Common myeloid progenitor, CD34-positive (primary cell): ENCODE measurements at regions of chr11 and their contacts with region 1.

Region 1: GRCh38 chr11:69296890-69297786 is 3.2 kb downstream of the MYEOV start:
- DNase-seq: peak; percentile 100
- H3K4me3 ChIP-seq: peak overlapping the region in 5 of 7 experiments; percentile 20 to 63 (median 54)
- H3K27ac ChIP-seq: peak overlapping the region; percentile 84 to 94
- H3K4me1 ChIP-seq: peaks cover 6 to 63% (median 60%) of the 10 kb centered on the region in 4 experiments
- H3K27me3 ChIP-seq: no peaks in the 10 kb centered on the region

Region 2: GRCh38 chr11:68763926-68764639 is 533.1 kb before region 1 on chr11:
- CTCF ChIA-PET with region 1: no interaction called
- POLR2A ChIA-PET with region 1: no interaction called
- DNase-seq: no peak
- H3K4me3 ChIP-seq: no peak overlapping the region
- H3K27ac ChIP-seq: no peak overlapping the region
- H3K4me1 ChIP-seq: no peaks in the 10 kb centered on the region
- H3K27me3 ChIP-seq: no peaks in the 10 kb centered on the region

Region 3: DNA sequence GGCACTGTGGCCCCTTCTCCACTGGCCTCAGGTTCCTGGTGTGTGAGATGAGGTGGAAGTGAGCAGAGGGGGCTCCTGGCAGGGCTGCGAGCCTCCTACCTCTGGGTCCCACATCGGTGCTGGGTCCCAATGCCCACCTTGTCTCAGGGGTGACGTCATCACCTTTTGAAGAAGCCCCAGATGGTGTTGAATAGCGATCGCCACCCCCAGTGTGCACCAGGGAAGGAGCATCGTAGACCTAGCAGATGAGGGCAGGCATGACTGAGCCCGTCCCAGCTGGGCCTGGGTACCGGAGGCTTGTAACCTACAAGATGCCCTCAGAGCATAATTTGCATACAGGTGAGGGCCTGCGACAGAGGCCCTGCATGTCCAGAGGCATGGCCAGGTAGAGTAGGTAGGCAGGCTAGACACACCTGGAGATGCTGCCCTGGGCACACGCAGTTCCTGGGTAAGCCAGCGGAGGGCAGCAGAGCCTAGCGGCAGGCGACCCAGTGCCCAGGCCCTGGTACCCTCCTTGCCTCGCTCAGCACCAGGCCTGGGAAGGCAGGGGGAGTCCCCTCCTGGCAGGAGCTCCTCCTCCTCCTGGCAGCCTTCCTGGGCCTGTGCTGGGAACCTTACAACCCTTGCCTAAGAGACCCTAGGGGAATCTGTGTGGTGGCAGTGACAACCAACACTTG is 195.9 kb before region 1 on chr11:
- CTCF ChIA-PET with region 1: interaction called, 12 read pairs
- POLR2A ChIA-PET with region 1: no interaction called
- DNase-seq: peak; percentile 54 to 70 (median 60)
- H3K4me3 ChIP-seq: no peak overlapping the region
- H3K27ac ChIP-seq: no peak overlapping the region
- H3K4me1 ChIP-seq: peaks cover 0 to 8% (median 3%) of the 10 kb centered on the region in 4 experiments
- H3K27me3 ChIP-seq: peaks cover 0 to 26% (median 2%) of the 10 kb centered on the region in 5 experiments

Region 4: DNA sequence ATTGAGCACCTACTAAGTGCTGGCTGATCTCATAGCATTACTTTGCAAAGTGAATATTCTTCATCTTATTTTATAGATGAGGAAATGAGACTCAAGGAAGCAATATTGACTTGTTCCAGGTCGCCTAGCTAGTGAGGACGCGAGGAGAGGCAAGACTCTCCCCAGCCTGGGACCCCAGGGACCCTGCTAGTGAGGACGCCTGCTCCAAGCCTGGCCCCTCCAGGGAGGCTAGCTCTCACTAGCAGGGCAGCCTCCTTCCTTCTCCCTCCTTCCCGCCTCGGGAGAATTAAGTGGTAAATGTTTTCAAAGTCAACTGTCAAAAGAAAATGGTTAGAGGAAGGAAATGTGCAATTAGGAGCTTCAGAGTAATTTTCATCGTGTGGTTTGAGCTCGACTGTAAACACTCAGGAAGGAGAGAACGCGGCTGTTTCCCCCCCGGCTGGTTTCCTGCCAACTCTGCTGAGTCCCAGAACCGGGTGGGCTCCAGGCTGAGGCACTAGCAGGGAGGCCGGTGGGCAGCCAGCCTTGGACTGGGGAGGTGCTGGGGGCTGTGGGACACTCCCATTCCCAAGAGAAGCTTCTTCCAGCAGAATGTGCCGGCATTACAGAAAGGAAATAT is 14.7 kb after region 1 on chr11:
- CTCF ChIA-PET with region 1: interaction called, 29 read pairs
- POLR2A ChIA-PET with region 1: interaction called, 42 read pairs
- DNase-seq: peak; percentile 81 to 95 (median 94)
- H3K4me3 ChIP-seq: peak overlapping the region in 3 of 7 experiments; percentile 19 to 55 (median 51)
- H3K27ac ChIP-seq: no peak overlapping the region
- H3K4me1 ChIP-seq: peaks cover 8 to 53% (median 33%) of the 10 kb centered on the region in 4 experiments
- H3K27me3 ChIP-seq: no peaks in the 10 kb centered on the region

Region 5: GRCh38 chr11:69449320-69450063 is 152.4 kb after region 1 on chr11:
- CTCF ChIA-PET with region 1: interaction called, 4 read pairs
- POLR2A ChIA-PET with region 1: interaction called, 14 read pairs
- DNase-seq: peak; percentile 86 to 98 (median 96)
- H3K4me3 ChIP-seq: peak overlapping the region in 2 of 7 experiments; percentile 29 to 31
- H3K27ac ChIP-seq: no peak overlapping the region
- H3K4me1 ChIP-seq: peaks cover 2 to 50% (median 39%) of the 10 kb centered on the region in 4 experiments
- H3K27me3 ChIP-seq: no peaks in the 10 kb centered on the region

Region 6: GRCh38 chr11:69642913-69643632 is 345.9 kb after region 1 on chr11:
- CTCF ChIA-PET with region 1: interaction called, 27 read pairs
- POLR2A ChIA-PET with region 1: interaction called, 3 read pairs
- DNase-seq: peak; percentile 72 to 84 (median 83)
- H3K4me3 ChIP-seq: peak overlapping the region in 6 of 7 experiments; percentile 43 to 74 (median 60)
- H3K27ac ChIP-seq: no peak overlapping the region
- H3K4me1 ChIP-seq: peaks cover 3 to 52% (median 47%) of the 10 kb centered on the region in 4 experiments
- H3K27me3 ChIP-seq: peaks cover 3 to 59% (median 22%) of the 10 kb centered on the region in 5 experiments